ENCODE measurements at regions of chr7 and their contacts with region 1.

Region 1: GRCh38 chr7:53965716-53966115 is 576.5 kb upstream of the VSTM2A start:
- DNase-seq: no peak
- ATAC-seq: no peak
- H3K4me3 ChIP-seq: no peak overlapping the region
- H3K27ac ChIP-seq: no peak overlapping the region
- H3K4me1 ChIP-seq: no peaks in the 10 kb centered on the region
- H3K27me3 ChIP-seq: no peaks in the 10 kb centered on the region
- CTCF ChIP-seq: no peak
- POLR2A ChIP-seq: no peak
- RAD21 ChIP-seq: no peak

Region 2: DNA sequence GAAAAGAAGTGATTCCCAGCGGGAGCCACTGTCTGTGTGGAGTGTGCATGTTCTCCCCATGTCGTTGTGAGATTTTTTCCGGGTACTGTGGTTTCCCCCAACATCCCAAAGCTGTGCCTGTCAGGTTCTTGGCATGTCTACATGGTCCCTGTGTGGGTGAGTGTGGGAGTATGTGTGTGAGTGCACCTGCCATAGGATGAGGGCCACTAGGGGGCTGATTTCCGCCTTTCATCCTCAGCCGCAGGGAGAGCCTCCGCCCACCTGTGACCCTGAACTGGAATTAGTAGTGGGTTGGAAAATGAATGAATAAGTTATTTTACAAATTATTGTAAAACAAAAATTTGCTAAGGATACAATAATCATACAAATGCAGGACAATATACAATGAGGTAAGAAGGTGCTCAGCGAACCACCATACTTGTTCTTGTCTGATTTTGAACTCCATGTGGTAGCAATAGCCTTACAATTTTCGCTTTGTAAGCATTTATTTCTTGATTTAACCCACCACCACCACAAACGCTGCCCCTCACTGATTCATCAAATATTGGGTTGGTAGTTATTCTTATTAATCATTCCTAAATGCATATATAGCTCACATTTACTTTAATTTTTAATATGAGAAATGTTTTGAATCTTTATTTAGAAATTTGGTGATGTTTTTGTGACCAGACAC is 64.7 kb before region 1 on chr7:
- CTCF ChIA-PET with region 1: no interaction called
- POLR2A ChIA-PET with region 1: no interaction called
- RAD21 ChIA-PET with region 1: no interaction called
- intact Hi-C with region 1: loop called (anchors 10 kb)
- DNase-seq: no peak
- ATAC-seq: no peak
- H3K4me3 ChIP-seq: no peak overlapping the region
- H3K27ac ChIP-seq: no peak overlapping the region
- H3K4me1 ChIP-seq: no peaks in the 10 kb centered on the region
- H3K27me3 ChIP-seq: no peaks in the 10 kb centered on the region
- CTCF ChIP-seq: no peak
- POLR2A ChIP-seq: no peak
- RAD21 ChIP-seq: no peak

Region 3: DNA sequence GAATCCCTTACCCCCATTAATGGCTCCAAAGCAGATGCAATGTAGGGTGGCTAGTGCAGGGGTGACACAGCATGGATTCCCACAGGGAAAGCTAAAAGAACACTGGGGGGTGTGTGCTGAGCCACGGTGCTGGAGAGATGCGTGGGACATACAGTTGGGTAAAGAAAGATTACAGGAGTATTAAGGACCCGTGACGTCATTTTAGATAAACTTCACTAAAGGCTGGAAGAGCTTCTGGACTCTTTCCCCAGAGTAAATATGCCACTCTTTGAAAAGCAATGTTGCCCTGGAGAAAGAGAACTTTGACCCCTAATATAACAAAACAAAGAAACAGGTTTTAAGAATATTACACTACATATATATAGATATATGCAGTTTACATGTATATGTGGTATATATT is 94.9 kb after region 1 on chr7:
- CTCF ChIA-PET with region 1: no interaction called
- POLR2A ChIA-PET with region 1: no interaction called
- RAD21 ChIA-PET with region 1: no interaction called
- intact Hi-C with region 1: no loop called
- DNase-seq: no peak
- ATAC-seq: no peak
- H3K4me3 ChIP-seq: no peak overlapping the region
- H3K27ac ChIP-seq: no peak overlapping the region
- H3K4me1 ChIP-seq: no peaks in the 10 kb centered on the region
- H3K27me3 ChIP-seq: no peaks in the 10 kb centered on the region
- CTCF ChIP-seq: no peak
- POLR2A ChIP-seq: no peak
- RAD21 ChIP-seq: no peak

Measured in HCT116 (cell line).